Activated CD8-positive, alpha-beta T cell treated with anti-CD3 and anti-CD28 coated beads, Interleukin-2, amount 10 ng/mL, durations not matched to agents 7 days and 5 days (primary cell): ENCODE measurements at regions of chr1 and their contacts with region 1.

Region 1: DNA sequence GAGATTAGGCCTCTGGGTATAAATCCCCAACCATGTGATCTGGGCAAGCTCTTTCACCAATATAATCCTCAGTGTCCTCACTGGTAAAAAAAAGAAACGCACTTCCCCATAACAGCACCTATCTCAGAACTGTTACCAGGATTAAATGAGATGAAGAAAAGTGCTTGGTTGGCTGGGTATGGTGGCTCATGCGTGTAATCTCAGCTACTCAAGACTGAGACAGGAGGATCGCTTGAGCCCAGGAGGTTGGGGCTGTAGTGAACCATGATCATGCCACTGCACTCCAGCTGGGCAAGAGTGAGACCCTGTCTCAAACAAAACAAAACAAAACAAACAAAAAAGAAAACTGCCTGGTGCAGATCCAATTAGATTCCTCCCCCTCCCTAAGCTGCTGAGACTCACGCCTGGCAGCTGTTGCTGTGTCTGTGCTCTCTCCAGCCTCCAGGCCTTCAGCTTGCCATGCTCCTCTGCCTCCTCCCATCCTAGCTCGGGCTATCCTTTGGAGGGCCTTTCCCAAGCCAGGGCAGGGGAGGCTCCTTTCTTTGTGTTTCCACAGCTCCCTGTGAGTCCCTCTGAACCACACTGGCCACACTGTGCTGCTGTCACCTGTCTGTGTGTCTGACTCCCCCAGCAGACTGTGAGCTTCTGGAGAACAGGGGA is 19.0 kb downstream of the CYB5RL start:
- DNase-seq: no peak
- ATAC-seq: no peak
- H3K4me3 Mint-ChIP-seq: no peak overlapping the region
- H3K27ac Mint-ChIP-seq: no peak overlapping the region
- H3K4me1 Mint-ChIP-seq: no peaks in the 10 kb centered on the region
- H3K27me3 Mint-ChIP-seq: no peaks in the 10 kb centered on the region

Region 2: GRCh38 chr1:54167422-54168139 is 13.2 kb before region 1 on chr1:
- CTCF ChIA-PET with region 1: interaction called, 15 read pairs
- POLR2A ChIA-PET with region 1: no interaction called
- DNase-seq: no peak
- ATAC-seq: no peak
- H3K4me3 Mint-ChIP-seq: no peak overlapping the region
- H3K27ac Mint-ChIP-seq: no peak overlapping the region
- H3K4me1 Mint-ChIP-seq: peaks cover 5% of the 10 kb centered on the region
- H3K27me3 Mint-ChIP-seq: no peaks in the 10 kb centered on the region

Region 3: DNA sequence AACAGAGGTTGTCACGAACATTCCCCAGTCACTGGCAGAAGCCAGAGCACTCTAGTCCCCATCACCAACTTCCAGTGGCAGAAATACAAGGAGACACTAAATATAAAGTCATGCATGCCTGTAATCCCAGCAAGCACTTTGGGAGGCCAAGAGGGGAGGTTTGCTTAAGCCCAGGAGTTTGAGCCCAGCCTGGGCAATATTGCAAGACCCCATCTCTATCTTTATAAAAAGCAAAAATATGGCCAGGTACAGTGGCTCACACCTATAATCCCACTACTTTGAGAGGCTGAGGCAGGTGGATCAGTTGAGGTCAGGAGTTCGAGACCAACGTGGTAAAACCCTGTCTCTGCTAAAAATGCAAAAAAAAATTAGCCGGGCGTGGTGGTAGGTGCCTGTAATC is 12.6 kb after region 1 on chr1:
- CTCF ChIA-PET with region 1: interaction called, 26 read pairs
- POLR2A ChIA-PET with region 1: no interaction called
- DNase-seq: no peak
- ATAC-seq: no peak
- H3K4me3 Mint-ChIP-seq: no peak overlapping the region
- H3K27ac Mint-ChIP-seq: no peak overlapping the region
- H3K4me1 Mint-ChIP-seq: no peaks in the 10 kb centered on the region
- H3K27me3 Mint-ChIP-seq: no peaks in the 10 kb centered on the region